Right cardiac atrium (tissue), 5 donors: ENCODE measurements at regions of chr17 and their contacts with region 1.

Region 1: DNA sequence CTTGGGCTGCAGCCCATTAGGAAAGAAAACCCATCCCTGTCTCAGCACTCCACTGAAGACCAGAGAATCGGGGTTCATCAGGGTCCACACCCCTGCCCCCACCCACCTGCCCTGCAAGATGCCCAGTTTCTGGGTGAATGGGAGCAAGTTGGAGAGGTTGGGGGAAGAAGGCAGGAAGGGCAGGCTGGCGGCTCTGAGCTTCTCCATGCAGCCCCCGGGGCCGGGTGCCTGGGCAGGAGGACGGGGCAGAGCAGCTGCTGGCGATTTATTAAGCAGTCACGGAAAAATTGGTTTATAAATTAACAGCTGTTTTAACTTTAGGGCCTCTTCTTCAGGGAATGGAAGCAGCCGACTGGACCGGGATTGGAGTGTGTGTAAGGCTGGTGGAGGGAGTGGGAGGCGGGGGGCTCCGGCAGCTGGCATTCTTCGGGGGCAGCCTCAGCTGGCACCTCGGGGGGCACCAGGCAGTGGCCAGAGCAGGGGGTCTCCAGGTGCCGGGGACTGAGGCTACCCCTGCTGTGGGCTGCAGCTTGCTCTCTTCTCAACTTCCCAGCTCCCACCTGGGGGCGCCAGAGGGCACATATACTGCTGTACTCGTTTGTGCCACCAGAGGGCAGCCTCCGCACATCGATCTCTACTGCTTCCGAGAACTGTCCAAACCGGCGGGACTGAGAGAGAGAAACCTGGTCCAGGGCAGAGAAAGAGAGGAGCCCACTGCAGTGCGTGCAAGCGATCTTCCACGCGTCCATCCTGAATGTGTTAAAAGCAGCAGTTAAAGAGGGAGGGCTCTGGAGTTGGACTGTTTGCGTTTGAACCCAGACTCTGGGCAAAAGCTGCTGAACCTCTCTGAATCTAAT is 5.0 kb upstream of the PPP1R1B start:
- DNase-seq: peak; percentile 79 to 92 (median 92)
- ATAC-seq: peak; percentile 56 to 72
- H3K4me3 ChIP-seq: no peak overlapping the region
- H3K27ac ChIP-seq: no peak overlapping the region
- H3K4me1 ChIP-seq: no peaks in the 10 kb centered on the region
- H3K27me3 ChIP-seq: no peaks in the 10 kb centered on the region

Region 2: GRCh38 chr17:39547713-39548478 is 73.9 kb before region 1 on chr17:
- intact Hi-C with region 1: loop called (anchors 2 to 5 kb)
- DNase-seq: peak; percentile 53 to 88 (median 87)
- ATAC-seq: peak; percentile 68 to 75
- H3K4me3 ChIP-seq: no peak overlapping the region
- H3K27ac ChIP-seq: peak overlapping the region; percentile 78
- H3K4me1 ChIP-seq: peaks cover 4% of the 10 kb centered on the region
- H3K27me3 ChIP-seq: no peaks in the 10 kb centered on the region

Region 3: DNA sequence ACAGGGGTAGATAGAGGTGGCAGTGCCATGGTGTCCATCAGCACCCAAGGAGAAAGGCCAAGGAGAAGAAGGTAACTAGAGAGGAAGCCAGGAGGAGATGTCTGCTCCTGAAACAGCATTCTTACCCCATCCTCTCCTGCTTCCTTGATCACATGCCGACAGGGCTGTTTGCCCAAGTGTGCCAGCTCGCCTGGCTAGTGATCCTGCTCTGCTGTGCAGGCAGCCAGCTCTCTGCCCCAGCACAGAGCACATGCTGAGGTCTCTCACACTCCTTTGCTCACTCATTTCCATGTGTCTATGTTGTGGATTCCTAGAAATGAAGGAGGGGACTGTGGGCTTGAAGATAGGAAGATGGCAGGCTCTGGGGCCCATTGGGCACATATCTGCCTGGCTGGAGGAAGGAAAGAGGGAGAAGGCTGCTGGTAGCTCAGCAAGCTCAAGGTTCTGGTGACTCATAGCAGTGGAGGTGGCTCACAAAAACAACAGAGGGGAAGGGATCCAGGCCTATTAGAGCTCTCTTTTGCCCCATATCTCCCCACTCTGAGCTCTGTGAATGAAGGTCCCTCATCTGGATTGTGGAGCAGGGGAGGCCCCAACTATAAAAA is 68.3 kb before region 1 on chr17:
- intact Hi-C with region 1: loop called (anchors 2 to 5 kb)
- DNase-seq: no peak
- ATAC-seq: no peak
- H3K4me3 ChIP-seq: no peak overlapping the region
- H3K27ac ChIP-seq: no peak overlapping the region
- H3K4me1 ChIP-seq: peaks cover 2% of the 10 kb centered on the region
- H3K27me3 ChIP-seq: no peaks in the 10 kb centered on the region

Region 4: DNA sequence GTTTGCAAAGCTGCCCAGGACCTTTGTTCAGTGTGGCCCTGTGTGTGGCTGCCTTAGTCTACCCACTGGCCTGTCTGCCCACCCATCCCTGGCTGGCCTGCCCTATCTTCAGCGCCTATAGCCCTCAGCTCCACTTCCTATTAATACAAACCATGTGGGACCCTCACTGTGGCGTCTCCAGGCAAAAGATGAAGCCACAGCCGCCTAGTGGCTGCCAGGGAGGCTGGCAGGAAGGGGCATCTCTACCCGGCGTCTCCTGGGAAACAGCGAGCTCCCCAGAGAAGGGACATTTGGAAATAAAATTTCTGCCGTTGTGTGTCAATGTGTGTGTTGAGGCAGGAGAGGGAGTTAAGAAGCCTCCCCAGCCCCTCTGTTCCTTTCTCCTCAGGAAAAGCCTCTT is 45.6 kb before region 1 on chr17:
- intact Hi-C with region 1: loop called in 1 of 4 experiments (anchors 5 kb)
- DNase-seq: no peak
- ATAC-seq: no peak
- H3K4me3 ChIP-seq: no peak overlapping the region
- H3K27ac ChIP-seq: no peak overlapping the region
- H3K4me1 ChIP-seq: no peaks in the 10 kb centered on the region
- H3K27me3 ChIP-seq: no peaks in the 10 kb centered on the region

Region 5: DNA sequence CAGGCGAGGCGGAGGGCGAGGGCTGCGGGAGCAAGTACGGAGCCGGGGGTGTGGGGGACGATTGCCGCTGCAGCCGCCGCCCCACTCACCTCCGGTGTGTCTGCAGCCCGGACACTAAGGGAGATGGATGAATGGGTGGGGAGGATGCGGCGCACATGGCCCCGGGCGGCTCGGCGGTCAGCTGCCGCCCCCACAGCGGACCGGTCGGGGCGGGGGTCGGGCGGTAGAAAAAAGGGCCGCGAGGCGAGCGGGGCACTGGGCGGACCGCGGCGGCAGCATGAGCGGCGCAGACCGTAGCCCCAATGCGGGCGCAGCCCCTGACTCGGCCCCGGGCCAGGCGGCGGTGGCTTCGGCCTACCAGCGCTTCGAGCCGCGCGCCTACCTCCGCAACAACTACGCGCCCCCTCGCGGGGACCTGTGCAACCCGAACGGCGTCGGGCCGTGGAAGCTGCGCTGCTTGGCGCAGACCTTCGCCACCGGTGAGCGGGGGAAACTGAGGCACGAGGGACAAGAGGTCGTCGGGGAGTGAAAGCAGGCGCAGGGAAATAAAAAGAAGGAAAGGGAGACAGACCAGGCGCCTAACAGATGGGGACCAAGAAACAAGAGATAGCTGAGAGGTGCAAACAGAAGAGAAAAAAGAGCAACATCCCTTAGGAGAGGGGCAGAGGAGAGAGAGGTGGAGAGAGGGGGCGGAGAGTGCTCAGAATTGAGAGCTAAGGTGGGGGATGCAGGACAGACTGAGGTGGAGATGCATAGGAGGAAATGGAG is 46.6 kb after region 1 on chr17 and contains the start of gene PNMT:
- intact Hi-C with region 1: loop called in 1 of 4 experiments (anchors 10 kb)
- DNase-seq: peak; percentile 75 to 93 (median 91)
- ATAC-seq: peak in 1 of 2 donors; percentile 3
- H3K4me3 ChIP-seq: peak within 1 kb of the TSS; percentile 25
- H3K27ac ChIP-seq: peak within 1 kb of the TSS; percentile 73
- H3K4me1 ChIP-seq: no peaks in the 10 kb centered on the region
- H3K27me3 ChIP-seq: no peaks in the 10 kb centered on the region
- total RNA-seq, gene PNMT: 18.1 to 39.6 (median 21.3) TPM

Region 6: GRCh38 chr17:39754161-39754951 is 132.6 kb after region 1 on chr17:
- intact Hi-C with region 1: loop called (anchors 2 to 5 kb)
- DNase-seq: peak; percentile 95 to 98 (median 97)
- ATAC-seq: peak; percentile 95 to 96
- H3K4me3 ChIP-seq: peak overlapping the region; percentile 45
- H3K27ac ChIP-seq: peak overlapping the region; percentile 40
- H3K4me1 ChIP-seq: no peaks in the 10 kb centered on the region
- H3K27me3 ChIP-seq: no peaks in the 10 kb centered on the region